Sciatic nerve (tissue), 2 donors: ENCODE measurements at regions of chr11 and their contacts with region 1.

Region 1: GRCh38 chr11:57456960-57457642 is 3.2 kb upstream of the RTN4RL2 start:
- DNase-seq: peak; percentile 94
- ATAC-seq: peak; percentile 93

Region 2: GRCh38 chr11:57144075-57144474 is 313.0 kb before region 1 on chr11:
- intact Hi-C with region 1: no loop called
- DNase-seq: no peak
- ATAC-seq: no peak

Region 3: DNA sequence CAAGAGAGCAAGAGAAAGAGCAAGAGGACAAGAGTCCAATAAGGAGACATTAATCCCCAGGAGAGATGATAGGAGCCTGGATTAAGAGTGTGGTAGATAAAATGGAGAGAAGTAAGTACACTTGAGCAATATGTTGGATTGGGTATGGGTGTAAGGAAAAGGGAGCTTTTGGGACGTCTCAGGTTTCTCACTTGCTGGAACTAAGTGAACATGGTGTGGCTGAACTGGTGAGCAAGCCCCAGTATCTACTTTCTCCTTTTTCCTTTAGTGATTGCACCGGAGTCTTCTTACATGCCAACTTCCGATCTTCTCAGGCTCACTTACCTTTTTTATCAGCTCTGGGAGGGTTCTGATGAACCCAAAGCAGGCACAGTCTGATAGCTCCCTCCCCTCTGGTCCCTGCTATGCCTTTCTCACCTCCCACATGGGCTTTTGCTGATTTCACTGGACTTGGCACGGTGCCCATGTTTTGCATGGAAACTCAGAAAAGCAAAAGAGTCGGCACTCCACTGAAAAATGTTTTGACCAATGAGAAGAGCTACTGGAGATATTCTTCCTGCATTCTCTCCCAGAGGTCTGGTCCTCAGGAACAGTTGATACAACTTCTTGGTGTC is 205.5 kb before region 1 on chr11:
- intact Hi-C with region 1: no loop called
- DNase-seq: no peak
- ATAC-seq: no peak

Region 4: DNA sequence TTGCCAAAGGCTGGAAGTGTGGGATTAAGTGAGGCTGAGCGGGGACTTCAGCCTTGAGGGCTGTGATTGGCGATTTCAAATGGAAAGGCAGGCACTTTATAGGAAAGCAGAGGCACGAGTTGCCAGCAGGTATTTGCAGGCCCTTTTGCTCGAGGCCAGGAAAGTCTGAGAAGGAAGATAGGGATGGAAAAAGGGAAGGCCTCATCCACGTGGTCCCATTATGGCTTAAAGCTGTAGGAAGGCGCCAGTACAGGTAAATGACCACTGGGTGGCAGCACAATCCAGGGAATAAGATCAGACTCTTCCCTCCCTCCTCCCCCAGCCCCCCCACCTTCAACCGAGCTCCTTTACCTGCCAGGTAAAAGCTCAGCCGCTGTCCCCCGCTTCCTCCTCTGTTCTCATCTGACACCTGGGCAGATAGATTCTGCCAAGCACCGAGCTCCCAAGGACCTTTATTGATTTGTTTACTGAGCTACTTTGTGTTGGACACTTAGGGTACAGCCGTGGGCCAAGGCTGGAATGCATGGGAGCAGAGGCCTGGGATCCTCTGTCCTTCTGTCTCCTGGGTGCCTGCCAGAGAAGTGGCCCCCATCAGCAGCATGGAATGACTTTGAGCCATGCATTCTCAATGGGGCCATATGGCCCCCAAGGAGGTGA is 111.4 kb before region 1 on chr11:
- intact Hi-C with region 1: loop called (anchors 10 kb)
- DNase-seq: peak; percentile 83
- ATAC-seq: peak; percentile 71

Region 5: GRCh38 chr11:57493507-57494503 is 36.7 kb after region 1 on chr11:
- intact Hi-C with region 1: no loop called
- DNase-seq: peak; percentile 76
- ATAC-seq: peak; percentile 68

Region 6: GRCh38 chr11:57527056-57527631 is 70.0 kb after region 1 on chr11:
- intact Hi-C with region 1: loop called (anchors 2 kb)
- DNase-seq: peak; percentile 88
- ATAC-seq: peak; percentile 28

Region 7: GRCh38 chr11:57588046-57588710 is 131.1 kb after region 1 on chr11:
- intact Hi-C with region 1: no loop called
- DNase-seq: no peak
- ATAC-seq: peak; percentile 44